ENCODE measurements at regions of chr4 and their contacts with region 1.

Region 1: GRCh38 chr4:83217721-83218522 is 66.7 kb downstream of the COQ2 start:
- DNase-seq: peak; percentile 76
- H3K4me3 Mint-ChIP-seq: peak overlapping the region; percentile 22
- H3K27ac Mint-ChIP-seq: peak overlapping the region; percentile 52
- H3K4me1 Mint-ChIP-seq: peaks cover 60% of the 10 kb centered on the region
- H3K27me3 Mint-ChIP-seq: peaks cover 5% of the 10 kb centered on the region

Region 2: GRCh38 chr4:82753725-82754410 is 464.1 kb before region 1 on chr4:
- CTCF ChIA-PET with region 1: no interaction called
- POLR2A ChIA-PET with region 1: no interaction called
- intact Hi-C with region 1: no loop called
- DNase-seq: no peak
- H3K4me3 Mint-ChIP-seq: no peak overlapping the region
- H3K27ac Mint-ChIP-seq: no peak overlapping the region
- H3K4me1 Mint-ChIP-seq: no peaks in the 10 kb centered on the region
- H3K27me3 Mint-ChIP-seq: peaks cover 1% of the 10 kb centered on the region

Region 3: DNA sequence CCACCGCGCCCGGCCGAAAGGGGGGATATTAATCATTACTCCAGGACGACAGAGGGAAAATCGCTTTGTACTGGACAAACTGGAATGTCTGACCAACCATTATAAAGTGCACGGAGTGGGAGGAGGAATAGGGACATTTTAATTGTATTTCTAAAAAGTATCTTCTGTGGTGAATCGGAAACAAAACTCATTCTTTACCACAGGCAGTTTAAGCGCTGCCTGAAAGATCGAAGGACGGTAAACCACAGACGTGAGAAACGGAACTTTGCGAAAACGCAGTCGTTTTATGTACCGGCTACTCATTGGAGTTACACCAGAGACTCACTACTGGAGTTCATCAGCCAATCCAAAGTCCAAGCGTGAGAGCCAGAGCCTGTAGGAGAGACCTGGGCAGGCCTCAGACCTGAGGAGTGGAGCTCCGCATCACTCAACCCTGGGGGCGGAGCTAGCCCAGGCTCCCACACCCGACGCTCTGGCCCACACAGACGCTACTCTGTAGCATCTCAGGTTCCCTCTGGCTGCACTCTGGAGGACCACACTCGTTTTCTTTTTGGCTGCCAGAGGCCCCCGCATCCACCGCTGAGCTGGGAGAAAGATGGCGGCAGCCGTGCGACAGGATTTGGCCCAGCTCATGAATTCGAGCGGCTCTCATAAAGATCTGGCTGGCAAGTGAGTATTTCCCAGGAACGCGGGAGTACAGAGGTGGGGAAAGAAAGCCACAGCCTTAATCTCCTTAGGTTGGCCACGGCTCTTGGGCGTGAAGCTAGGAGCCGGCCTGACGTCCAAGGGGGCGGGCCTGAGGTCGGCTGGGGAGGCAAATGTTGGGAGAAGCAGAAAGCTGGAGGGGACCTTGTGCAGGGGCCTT is 183.1 kb before region 1 on chr4 and contains the start of gene COPS4:
- CTCF ChIA-PET with region 1: interaction called, 3 read pairs
- POLR2A ChIA-PET with region 1: no interaction called
- intact Hi-C with region 1: loop called (anchors 1 kb)
- DNase-seq: peak; percentile 97
- H3K4me3 Mint-ChIP-seq: peak within 1 kb of the TSS; percentile 85
- H3K27ac Mint-ChIP-seq: peak within 1 kb of the TSS; percentile 98
- H3K4me1 Mint-ChIP-seq: peaks cover 28% of the 10 kb centered on the region
- H3K27me3 Mint-ChIP-seq: no peaks in the 10 kb centered on the region
- total RNA-seq, gene COPS4: 38.5 to 40.6 TPM

Region 4: DNA sequence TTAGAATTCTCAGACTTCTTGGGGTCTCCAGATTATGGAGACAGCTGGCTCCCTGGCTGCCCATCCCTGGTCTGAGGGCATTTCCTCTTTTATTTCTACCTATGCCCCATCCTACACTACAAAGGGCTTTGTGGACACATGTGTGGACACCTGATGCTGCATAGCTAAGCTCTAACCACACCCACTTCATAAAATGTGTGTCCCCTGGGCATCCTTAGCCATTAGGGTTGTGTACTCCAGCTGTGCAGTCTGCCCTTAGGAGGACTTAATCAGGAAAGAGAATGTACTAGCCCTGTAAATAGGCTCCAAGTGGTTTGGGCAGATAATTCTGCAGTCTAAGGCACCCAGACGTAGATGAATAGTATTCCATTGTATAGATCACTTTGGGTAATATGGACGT is 19.7 kb after region 1 on chr4:
- CTCF ChIA-PET with region 1: interaction called, 10 read pairs
- POLR2A ChIA-PET with region 1: interaction called, 15 read pairs
- intact Hi-C with region 1: loop called (anchors 1 kb)
- DNase-seq: no peak
- H3K4me3 Mint-ChIP-seq: no peak overlapping the region
- H3K27ac Mint-ChIP-seq: no peak overlapping the region
- H3K4me1 Mint-ChIP-seq: peaks cover 36% of the 10 kb centered on the region
- H3K27me3 Mint-ChIP-seq: peaks cover 41% of the 10 kb centered on the region

Region 5: DNA sequence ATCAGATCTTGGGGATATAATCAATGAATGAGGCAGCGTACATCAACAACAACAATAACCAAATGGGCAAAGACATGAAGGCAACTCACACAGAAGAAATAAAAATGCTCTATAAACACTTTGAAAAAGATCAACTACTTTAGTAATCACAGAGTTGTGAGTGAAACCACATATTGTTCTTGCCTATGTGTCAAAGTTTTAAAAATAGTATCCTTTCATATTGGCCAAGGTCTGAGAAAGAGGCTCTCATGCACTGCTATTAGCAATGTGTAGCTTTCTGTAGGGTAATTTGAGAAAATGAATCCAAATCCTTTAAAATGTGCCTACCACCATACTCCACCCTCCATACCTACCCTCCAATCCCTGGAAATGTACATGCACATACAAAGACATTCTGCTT is 41.7 kb after region 1 on chr4:
- CTCF ChIA-PET with region 1: interaction called, 10 read pairs
- POLR2A ChIA-PET with region 1: no interaction called
- intact Hi-C with region 1: loop called (anchors 2 kb)
- DNase-seq: no peak
- H3K4me3 Mint-ChIP-seq: no peak overlapping the region
- H3K27ac Mint-ChIP-seq: no peak overlapping the region
- H3K4me1 Mint-ChIP-seq: no peaks in the 10 kb centered on the region
- H3K27me3 Mint-ChIP-seq: no peaks in the 10 kb centered on the region

Measured in activated CD4-positive, alpha-beta memory T cell treated with anti-CD3 and anti-CD28 coated beads for 36 hours (primary cell).